Calu3 (cell line): ENCODE measurements at regions of chr13 and their contacts with region 1.

Region 1: DNA sequence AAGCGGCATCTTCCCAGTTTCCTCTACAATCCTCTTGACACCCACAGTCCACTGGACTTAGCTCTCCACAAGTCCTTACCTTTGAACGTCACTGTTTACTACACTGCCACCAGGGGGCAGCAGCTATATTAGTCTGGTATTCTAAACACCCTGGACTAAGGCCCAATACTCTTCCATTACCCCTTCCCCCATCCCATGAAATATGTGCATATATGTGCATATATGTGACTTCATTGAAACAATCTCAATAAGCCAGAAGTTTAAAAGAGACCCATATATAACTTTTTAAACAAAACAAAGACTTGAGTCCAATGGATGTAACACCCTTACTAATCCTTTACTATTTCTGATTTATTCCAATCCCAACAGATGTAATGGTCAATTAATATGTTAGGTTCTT is 15.5 kb downstream of the GGACT start:
- DNase-seq: peak; percentile 41
- H3K4me3 Mint-ChIP-seq: no peak overlapping the region
- H3K27ac Mint-ChIP-seq: no peak overlapping the region
- H3K4me1 Mint-ChIP-seq: no peaks in the 10 kb centered on the region
- H3K27me3 Mint-ChIP-seq: no peaks in the 10 kb centered on the region
- CTCF ChIP-seq: no peak

Region 2: GRCh38 chr13:100560498-100561157 is 12.5 kb before region 1 on chr13:
- CTCF ChIA-PET with region 1: no interaction called
- intact Hi-C with region 1: no loop called
- DNase-seq: no peak
- H3K4me3 Mint-ChIP-seq: no peak overlapping the region
- H3K27ac Mint-ChIP-seq: no peak overlapping the region
- H3K4me1 Mint-ChIP-seq: no peaks in the 10 kb centered on the region
- H3K27me3 Mint-ChIP-seq: no peaks in the 10 kb centered on the region
- CTCF ChIP-seq: no peak

Region 3: DNA sequence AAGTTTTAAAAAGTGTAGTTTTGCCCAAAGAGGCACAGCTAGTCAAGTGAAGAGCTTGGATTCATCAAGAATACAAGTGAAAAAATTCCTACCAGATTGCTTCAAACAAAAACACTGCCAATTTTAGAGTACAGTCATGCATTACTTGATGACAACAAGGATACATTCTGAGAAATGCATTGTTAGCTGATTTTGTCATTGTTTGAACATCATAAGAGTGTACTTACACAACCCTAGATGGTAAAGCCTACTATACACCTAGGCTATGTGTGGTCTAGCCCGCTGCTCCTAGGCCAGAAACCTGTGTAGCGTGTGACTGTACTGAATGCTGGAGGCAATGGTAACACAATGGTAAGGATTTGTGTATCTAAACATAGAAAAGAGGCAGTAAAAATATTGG is 60.3 kb after region 1 on chr13:
- CTCF ChIA-PET with region 1: no interaction called
- intact Hi-C with region 1: no loop called
- DNase-seq: no peak
- H3K4me3 Mint-ChIP-seq: no peak overlapping the region
- H3K27ac Mint-ChIP-seq: no peak overlapping the region
- H3K4me1 Mint-ChIP-seq: no peaks in the 10 kb centered on the region
- H3K27me3 Mint-ChIP-seq: no peaks in the 10 kb centered on the region
- CTCF ChIP-seq: no peak

Region 4: GRCh38 chr13:101098873-101099272 is 525.8 kb after region 1 on chr13:
- CTCF ChIA-PET with region 1: no interaction called
- intact Hi-C with region 1: loop called (anchors 5 kb)
- DNase-seq: no peak
- H3K4me3 Mint-ChIP-seq: no peak overlapping the region
- H3K27ac Mint-ChIP-seq: no peak overlapping the region
- H3K4me1 Mint-ChIP-seq: no peaks in the 10 kb centered on the region
- H3K27me3 Mint-ChIP-seq: no peaks in the 10 kb centered on the region
- CTCF ChIP-seq: no peak